AG04450 (cell line): ENCODE measurements at regions of chr17 and their contacts with region 1.

Region 1: GRCh38 chr17:50865984-50866774 is at the start of gene TOB1:
- DNase-seq: peak; percentile 83
- H3K4me3 ChIP-seq: peak within 1 kb of the TSS; percentile 94
- H3K27ac ChIP-seq: peak within 1 kb of the TSS; percentile 95
- H3K27me3 ChIP-seq: no peaks in the 10 kb centered on the region
- CTCF ChIP-seq: no peak
- polyA plus RNA-seq, gene TOB1: 18.3 and 20.3 TPM in 2 replicates

Region 2: DNA sequence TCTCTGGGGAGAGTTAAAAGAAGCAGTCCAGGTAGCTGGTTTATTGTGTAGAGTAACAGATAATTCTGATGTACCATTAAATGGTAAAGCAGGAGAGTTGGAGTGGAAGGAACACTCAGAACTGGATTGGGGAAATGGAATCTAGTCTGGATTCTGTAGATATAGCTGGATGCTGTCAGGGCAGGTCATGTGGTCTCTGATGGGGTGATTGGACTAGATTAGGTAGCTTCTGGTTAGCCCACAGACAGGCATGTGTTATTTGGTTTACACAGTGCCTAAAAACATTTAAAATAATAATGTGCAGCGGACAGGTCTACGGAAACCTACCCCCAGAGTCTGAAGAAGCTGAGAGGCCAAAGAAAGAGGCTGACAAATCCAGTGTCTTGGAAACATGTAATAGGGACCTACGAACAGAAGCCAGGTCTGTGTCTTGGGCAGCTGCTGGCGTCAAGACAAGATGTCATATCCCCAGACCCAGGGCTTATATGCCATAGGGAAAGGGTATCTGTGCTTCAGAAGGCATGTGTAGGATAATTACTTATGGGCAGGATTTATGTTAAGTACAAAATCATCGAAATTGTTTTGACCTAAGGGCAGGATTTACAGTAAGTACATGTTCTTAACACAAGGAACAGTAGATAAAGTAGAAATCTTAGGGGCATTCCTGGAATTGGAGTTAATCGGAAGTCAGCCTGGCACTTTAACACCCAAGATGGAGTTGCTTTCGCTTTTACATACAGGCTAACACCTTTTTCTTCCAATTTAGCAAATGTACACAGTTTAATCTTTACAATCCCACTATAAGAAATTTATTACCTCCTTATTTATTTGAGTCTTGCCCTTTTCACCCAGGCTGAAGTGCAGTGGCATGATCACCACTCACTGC is 134.4 kb before region 1 on chr17:
- CTCF ChIA-PET with region 1: no interaction called
- POLR2A ChIA-PET with region 1: no interaction called
- DNase-seq: no peak
- H3K4me3 ChIP-seq: no peak overlapping the region
- H3K27ac ChIP-seq: no peak overlapping the region
- H3K27me3 ChIP-seq: no peaks in the 10 kb centered on the region
- CTCF ChIP-seq: no peak

Region 3: DNA sequence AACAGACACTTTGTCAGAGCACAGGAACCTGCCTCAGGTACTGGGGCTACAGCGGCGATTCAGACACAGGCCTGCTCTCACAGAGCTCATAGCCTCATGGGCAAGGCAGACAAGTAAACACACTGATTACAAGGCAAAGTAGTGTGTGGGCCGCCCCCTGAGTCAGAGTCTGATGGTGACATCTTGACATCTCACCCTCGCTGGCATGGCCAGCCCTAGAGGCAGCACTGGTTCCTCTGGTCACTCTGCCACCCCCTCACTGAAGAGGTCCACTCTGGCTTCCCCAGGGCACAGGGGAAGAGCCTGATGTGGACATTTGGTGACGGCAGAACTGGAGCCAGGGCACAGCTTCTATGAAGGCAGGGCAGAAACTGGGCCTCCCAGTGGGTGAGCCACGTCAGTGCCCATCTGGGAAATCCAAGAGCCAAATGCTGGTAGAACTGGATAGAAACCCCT is 32.9 kb after region 1 on chr17:
- CTCF ChIA-PET with region 1: interaction called, 3 read pairs
- POLR2A ChIA-PET with region 1: interaction called, 55 read pairs
- DNase-seq: no peak
- H3K4me3 ChIP-seq: no peak overlapping the region
- H3K27ac ChIP-seq: no peak overlapping the region
- H3K27me3 ChIP-seq: peaks cover 2% of the 10 kb centered on the region
- CTCF ChIP-seq: no peak

Region 4: GRCh38 chr17:50913120-50913519 is 46.9 kb after region 1 on chr17:
- CTCF ChIA-PET with region 1: no interaction called
- POLR2A ChIA-PET with region 1: interaction called, 14 read pairs
- DNase-seq: no peak
- H3K4me3 ChIP-seq: no peak overlapping the region
- H3K27ac ChIP-seq: no peak overlapping the region
- H3K27me3 ChIP-seq: peaks cover 12% of the 10 kb centered on the region
- CTCF ChIP-seq: no peak

Region 5: GRCh38 chr17:50944054-50944901 is 78.1 kb after region 1 on chr17:
- CTCF ChIA-PET with region 1: interaction called, 3 read pairs
- POLR2A ChIA-PET with region 1: interaction called, 68 read pairs
- DNase-seq: no peak
- H3K4me3 ChIP-seq: peak overlapping the region; percentile 25; the same call in 1 of the 2 replicates
- H3K27ac ChIP-seq: no peak overlapping the region
- H3K27me3 ChIP-seq: no peaks in the 10 kb centered on the region
- CTCF ChIP-seq: no peak

Region 6: DNA sequence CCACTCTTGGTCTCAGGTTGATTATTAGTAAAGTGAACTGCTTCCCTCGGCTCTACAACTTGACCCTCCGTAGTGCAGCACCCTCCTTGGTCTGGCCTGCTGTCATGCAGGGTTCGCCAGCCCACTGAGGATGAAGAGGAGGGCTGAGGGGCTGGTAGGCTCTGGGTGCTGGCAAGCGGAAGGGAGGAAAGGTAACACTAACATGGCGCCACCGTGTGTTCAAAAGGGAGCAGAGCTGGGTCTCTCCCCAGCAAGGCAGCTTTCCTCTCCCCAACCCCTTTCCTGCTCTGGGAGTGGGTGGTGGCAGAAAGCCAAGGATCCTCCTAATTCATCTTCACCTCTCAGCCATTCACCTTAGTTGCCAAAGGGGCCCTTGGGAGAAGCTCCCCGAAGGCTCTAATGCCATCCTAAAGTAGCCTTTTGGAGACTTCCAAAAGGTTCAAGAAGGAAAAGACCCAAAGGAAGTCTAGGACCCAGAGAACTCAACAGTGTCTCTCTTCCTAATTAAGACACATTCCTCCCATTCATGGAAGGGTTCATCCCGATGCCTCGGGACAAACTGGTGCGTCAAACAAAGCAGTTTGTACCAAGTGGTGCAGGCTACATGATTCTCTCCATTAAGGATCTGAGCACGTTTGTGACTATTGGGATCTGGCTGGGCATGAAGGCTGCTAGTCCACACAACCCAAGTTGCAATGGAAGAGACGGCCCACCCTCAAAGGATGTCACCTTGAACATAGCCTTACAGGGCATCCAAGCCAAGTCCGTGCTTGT is 90.8 kb after region 1 on chr17:
- CTCF ChIA-PET with region 1: interaction called, 19 read pairs
- POLR2A ChIA-PET with region 1: interaction called, 85 read pairs
- DNase-seq: peak; percentile 20
- H3K4me3 ChIP-seq: no peak overlapping the region
- H3K27ac ChIP-seq: no peak overlapping the region
- H3K27me3 ChIP-seq: no peaks in the 10 kb centered on the region
- CTCF ChIP-seq: peak; percentile 87

Region 7: GRCh38 chr17:50976951-50977472 is 110.8 kb after region 1 on chr17:
- CTCF ChIA-PET with region 1: interaction called, 7 read pairs
- POLR2A ChIA-PET with region 1: interaction called, 10 read pairs
- DNase-seq: no peak
- H3K4me3 ChIP-seq: no peak overlapping the region
- H3K27ac ChIP-seq: no peak overlapping the region
- H3K27me3 ChIP-seq: no peaks in the 10 kb centered on the region
- CTCF ChIP-seq: no peak

Region 8: GRCh38 chr17:51601622-51602261 is 735.6 kb after region 1 on chr17:
- CTCF ChIA-PET with region 1: no interaction called
- POLR2A ChIA-PET with region 1: no interaction called
- DNase-seq: no peak
- H3K4me3 ChIP-seq: no peak overlapping the region
- H3K27ac ChIP-seq: no peak overlapping the region
- H3K27me3 ChIP-seq: no peaks in the 10 kb centered on the region
- CTCF ChIP-seq: no peak